ENCODE measurements at regions of chr1 and their contacts with region 1.

Region 1: GRCh38 chr1:18902523-18903290 is at the start of gene ALDH4A1:
- DNase-seq: peak; percentile 85 to 96 (median 93)
- ATAC-seq: peak; percentile 96
- H3K4me3 ChIP-seq: peak within 1 kb of the TSS; percentile 66 to 74
- H3K4me3 Mint-ChIP-seq: peak within 1 kb of the TSS; percentile 91
- H3K27ac ChIP-seq: peak within 1 kb of the TSS; percentile 55 to 89
- H3K27ac Mint-ChIP-seq: peak within 1 kb of the TSS; percentile 96
- H3K4me1 ChIP-seq: peaks cover 32% of the 10 kb centered on the region
- H3K4me1 Mint-ChIP-seq: peaks cover 29% of the 10 kb centered on the region
- H3K27me3 ChIP-seq: no peaks in the 10 kb centered on the region
- H3K27me3 Mint-ChIP-seq: no peaks in the 10 kb centered on the region
- CTCF ChIP-seq: no peak
- total RNA-seq, gene ALDH4A1: 1.0 to 1.3 TPM

Region 2: GRCh38 chr1:18883636-18884418 is 18.9 kb before region 1 on chr1:
- CTCF ChIA-PET with region 1: interaction called, 116 read pairs
- POLR2A ChIA-PET with region 1: no interaction called
- intact Hi-C with region 1: loop called in 1 of 2 experiments (anchors 1 kb)
- DNase-seq: peak; percentile 51 to 82 (median 76)
- ATAC-seq: peak; percentile 97
- H3K4me3 ChIP-seq: no peak overlapping the region
- H3K4me3 Mint-ChIP-seq: no peak overlapping the region
- H3K27ac ChIP-seq: no peak overlapping the region
- H3K27ac Mint-ChIP-seq: no peak overlapping the region
- H3K4me1 ChIP-seq: no peaks in the 10 kb centered on the region
- H3K4me1 Mint-ChIP-seq: no peaks in the 10 kb centered on the region
- H3K27me3 ChIP-seq: no peaks in the 10 kb centered on the region
- H3K27me3 Mint-ChIP-seq: no peaks in the 10 kb centered on the region
- CTCF ChIP-seq: peak; percentile 86

Region 3: GRCh38 chr1:18913065-18913835 is 10.5 kb after region 1 on chr1:
- CTCF ChIA-PET with region 1: interaction called, 27 read pairs
- POLR2A ChIA-PET with region 1: no interaction called
- intact Hi-C with region 1: no loop called
- DNase-seq: peak; percentile 46 to 84 (median 73)
- ATAC-seq: peak; percentile 89
- H3K4me3 ChIP-seq: no peak overlapping the region
- H3K4me3 Mint-ChIP-seq: no peak overlapping the region
- H3K27ac ChIP-seq: no peak overlapping the region
- H3K27ac Mint-ChIP-seq: peak overlapping the region; percentile 22
- H3K4me1 ChIP-seq: peaks cover 5% of the 10 kb centered on the region
- H3K4me1 Mint-ChIP-seq: peaks cover 8% of the 10 kb centered on the region
- H3K27me3 ChIP-seq: no peaks in the 10 kb centered on the region
- H3K27me3 Mint-ChIP-seq: no peaks in the 10 kb centered on the region
- CTCF ChIP-seq: peak; percentile 92

Region 4: DNA sequence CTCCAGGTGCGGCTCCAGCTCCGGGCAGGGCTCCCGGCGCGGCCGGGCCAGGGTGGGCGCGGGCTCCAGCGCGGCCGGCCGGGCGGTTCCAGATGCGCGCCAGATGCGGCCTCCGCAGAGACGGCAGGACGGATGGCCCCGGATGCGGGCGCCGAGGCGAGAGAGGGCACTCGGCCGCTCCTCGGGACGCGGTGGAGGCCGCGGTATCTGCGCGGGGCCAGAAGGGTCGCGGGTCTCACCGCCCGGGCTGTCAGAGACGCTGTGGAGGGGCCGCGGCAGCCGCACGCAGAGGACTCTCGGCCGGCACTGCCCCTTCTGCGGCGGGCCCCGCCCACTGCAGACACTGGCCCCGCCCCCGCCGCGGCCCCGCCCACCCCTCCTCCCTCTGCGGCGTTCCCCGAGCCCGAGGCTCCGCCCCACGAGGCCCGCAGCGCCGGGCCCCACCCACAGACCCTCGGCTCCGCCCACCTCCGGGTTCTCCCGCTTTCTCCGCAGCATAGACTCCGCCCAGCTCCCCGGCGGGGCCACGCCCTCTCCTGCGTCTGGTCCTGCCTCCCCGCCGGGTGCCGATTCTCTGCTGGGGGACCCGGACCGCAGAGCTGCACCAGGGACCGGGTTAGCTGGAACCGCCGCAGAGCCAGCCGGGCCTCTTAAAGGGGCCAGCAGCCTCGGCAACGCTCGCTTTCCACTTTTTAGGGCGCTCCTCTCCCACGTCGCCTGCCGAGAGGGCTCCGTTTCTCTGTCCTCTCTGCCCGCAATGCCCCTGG is 53.8 kb after region 1 on chr1 and contains the start of gene IFFO2:
- CTCF ChIA-PET with region 1: interaction called, 425 read pairs
- POLR2A ChIA-PET with region 1: interaction called, 14 read pairs
- intact Hi-C with region 1: loop called (anchors 1 kb)
- DNase-seq: peak; percentile 96 to 100 (median 98)
- ATAC-seq: peak; percentile 82
- H3K4me3 ChIP-seq: peak within 1 kb of the TSS; percentile 66 to 80
- H3K4me3 Mint-ChIP-seq: peak within 1 kb of the TSS; percentile 96
- H3K27ac ChIP-seq: peak within 1 kb of the TSS; percentile 36 to 52
- H3K27ac Mint-ChIP-seq: peak within 1 kb of the TSS; percentile 97
- H3K4me1 ChIP-seq: peaks cover 57% of the 10 kb centered on the region
- H3K4me1 Mint-ChIP-seq: peaks cover 59% of the 10 kb centered on the region
- H3K27me3 ChIP-seq: peaks cover 0 to 2% of the 10 kb centered on the region in 2 experiments
- H3K27me3 Mint-ChIP-seq: no peaks in the 10 kb centered on the region
- CTCF ChIP-seq: no peak
- total RNA-seq, gene IFFO2: 92.6 to 107 TPM

Region 5: GRCh38 chr1:19074902-19075721 is 172.4 kb after region 1 on chr1:
- CTCF ChIA-PET with region 1: interaction called, 53 read pairs
- POLR2A ChIA-PET with region 1: interaction called, 3 read pairs
- intact Hi-C with region 1: loop called (anchors 1 to 5 kb)
- DNase-seq: peak in 1 of 9 experiments; percentile 23
- ATAC-seq: peak; percentile 24
- H3K4me3 ChIP-seq: peak overlapping the region; percentile 16 to 21
- H3K4me3 Mint-ChIP-seq: peak overlapping the region; percentile 56
- H3K27ac ChIP-seq: peak overlapping the region in 1 of 2 experiments; percentile 52
- H3K27ac Mint-ChIP-seq: peak overlapping the region; percentile 69
- H3K4me1 ChIP-seq: peaks cover 46% of the 10 kb centered on the region
- H3K4me1 Mint-ChIP-seq: peaks cover 41% of the 10 kb centered on the region
- H3K27me3 ChIP-seq: no peaks in the 10 kb centered on the region
- H3K27me3 Mint-ChIP-seq: no peaks in the 10 kb centered on the region
- CTCF ChIP-seq: no peak

Region 6: GRCh38 chr1:19113697-19114092 is 211.0 kb after region 1 on chr1:
- CTCF ChIA-PET with region 1: interaction called, 5 read pairs
- POLR2A ChIA-PET with region 1: no interaction called
- intact Hi-C with region 1: loop called (anchors 1 to 5 kb)
- DNase-seq: peak in 7 of 9 experiments; percentile 8 to 54 (median 36)
- ATAC-seq: peak; percentile 65
- H3K4me3 ChIP-seq: no peak overlapping the region
- H3K4me3 Mint-ChIP-seq: no peak overlapping the region
- H3K27ac ChIP-seq: no peak overlapping the region
- H3K27ac Mint-ChIP-seq: no peak overlapping the region
- H3K4me1 ChIP-seq: no peaks in the 10 kb centered on the region
- H3K4me1 Mint-ChIP-seq: no peaks in the 10 kb centered on the region
- H3K27me3 ChIP-seq: no peaks in the 10 kb centered on the region
- H3K27me3 Mint-ChIP-seq: no peaks in the 10 kb centered on the region
- CTCF ChIP-seq: peak; percentile 36

Region 7: GRCh38 chr1:19882111-19883071 is 979.7 kb after region 1 on chr1 and contains the start of gene OTUD3:
- CTCF ChIA-PET with region 1: no interaction called
- POLR2A ChIA-PET with region 1: no interaction called
- intact Hi-C with region 1: loop called in 1 of 2 experiments (anchors 5 kb)
- DNase-seq: peak; percentile 89 to 99 (median 95)
- ATAC-seq: peak; percentile 97
- H3K4me3 ChIP-seq: peak within 1 kb of the TSS; percentile 71 to 88
- H3K4me3 Mint-ChIP-seq: peak within 1 kb of the TSS; percentile 90
- H3K27ac ChIP-seq: peak within 1 kb of the TSS; percentile 67 to 77
- H3K27ac Mint-ChIP-seq: peak within 1 kb of the TSS; percentile 61
- H3K4me1 ChIP-seq: peaks cover 18% of the 10 kb centered on the region
- H3K4me1 Mint-ChIP-seq: peaks cover 43% of the 10 kb centered on the region
- H3K27me3 ChIP-seq: no peaks in the 10 kb centered on the region
- H3K27me3 Mint-ChIP-seq: no peaks in the 10 kb centered on the region
- CTCF ChIP-seq: peak; percentile 90
- total RNA-seq, gene OTUD3: 16.5 to 17.3 TPM

Measured in CD8-positive, alpha-beta T cell (primary cell).